Sciatic nerve (tissue), 2 donors: ENCODE measurements at regions of chr2 and their contacts with region 1.

Region 1: GRCh38 chr2:118539290-118539689 is 308.2 kb downstream of the EN1 start:
- DNase-seq: peak; percentile 62
- ATAC-seq: no peak

Region 2: DNA sequence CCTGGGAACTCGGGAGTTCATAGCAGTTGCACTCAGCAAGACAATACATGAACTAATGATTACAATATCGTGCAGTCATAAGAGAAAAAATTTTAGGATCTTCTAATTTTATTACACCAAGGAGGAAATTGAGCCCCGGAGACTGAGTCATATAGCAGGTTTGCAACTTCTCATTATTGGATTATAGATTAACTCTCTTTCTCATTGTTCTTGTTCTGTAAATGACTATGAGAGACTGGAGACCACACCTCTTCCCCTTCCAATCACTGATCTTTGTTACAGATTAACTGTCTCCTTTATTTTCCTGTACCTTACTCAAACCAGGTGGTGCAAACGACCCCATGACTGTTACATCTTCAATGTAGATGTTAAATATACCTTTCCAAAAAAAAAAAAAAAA is 1160.6 kb before region 1 on chr2:
- intact Hi-C with region 1: no loop called
- DNase-seq: no peak
- ATAC-seq: no peak

Region 3: GRCh38 chr2:118340103-118340502 is 199.2 kb before region 1 on chr2:
- intact Hi-C with region 1: no loop called
- DNase-seq: no peak
- ATAC-seq: no peak

Region 4: DNA sequence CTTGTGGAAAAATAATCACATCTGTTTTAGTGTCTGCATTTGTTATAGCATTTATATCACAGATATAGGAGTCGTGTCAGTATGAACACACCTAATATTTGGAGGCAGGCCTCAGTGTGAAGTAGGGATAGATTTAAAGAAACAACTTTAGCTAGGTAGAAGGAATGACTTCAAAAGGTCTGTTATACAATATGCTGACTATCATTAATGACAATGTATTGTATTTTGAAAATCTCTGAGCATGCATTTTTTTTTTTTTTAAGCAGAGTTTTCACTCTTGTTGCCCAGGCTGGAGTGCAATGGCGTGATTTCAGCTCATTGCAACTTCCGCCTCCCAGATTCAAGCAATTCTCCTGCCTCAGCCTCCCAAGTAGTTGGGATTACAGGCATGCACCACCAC is 59.9 kb after region 1 on chr2:
- intact Hi-C with region 1: loop called (anchors 2 kb)
- DNase-seq: no peak
- ATAC-seq: no peak